ENCODE measurements at regions of chr20 and their contacts with region 1.

Region 1: DNA sequence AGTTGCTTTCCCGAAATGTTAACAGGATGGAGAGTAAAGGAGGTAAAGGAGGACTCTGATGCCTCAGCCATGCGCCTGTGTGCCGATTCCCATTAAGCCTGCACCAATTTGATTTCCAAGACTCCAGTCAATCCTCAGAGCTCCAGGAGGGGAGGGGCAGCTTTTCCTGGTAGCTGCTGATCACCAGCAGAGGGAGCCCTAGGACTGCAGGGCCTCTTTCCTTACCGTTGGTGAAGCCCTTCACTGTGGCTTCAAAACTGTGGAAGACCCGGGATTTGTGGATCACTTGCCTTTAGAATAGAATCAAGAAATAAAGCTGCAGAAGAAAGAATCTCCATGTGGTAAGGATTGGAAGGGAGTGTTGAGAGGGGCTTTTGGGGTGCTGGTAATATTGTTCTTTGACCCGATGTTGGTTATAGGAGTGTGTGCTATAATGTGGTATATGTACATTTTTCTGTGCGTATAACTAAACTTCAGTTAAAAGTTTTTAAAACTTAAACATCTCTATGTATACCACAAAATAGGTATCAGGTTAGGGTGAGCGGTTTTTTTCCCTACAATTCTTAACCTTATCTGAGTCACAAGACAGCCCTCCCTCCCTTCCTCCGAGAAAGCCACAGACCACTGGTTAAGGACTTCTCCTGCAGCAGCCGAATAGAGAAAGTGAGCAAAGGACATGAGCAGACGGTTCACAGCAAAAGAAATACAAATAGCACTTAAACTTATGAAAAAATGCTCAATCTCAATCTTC is 6.9 kb upstream of the OSER1 start:
- DNase-seq: peak; percentile 71
- H3K4me3 Mint-ChIP-seq: peak overlapping the region; percentile 56
- H3K27ac Mint-ChIP-seq: peak overlapping the region; percentile 78
- H3K4me1 Mint-ChIP-seq: peaks cover 38% of the 10 kb centered on the region
- H3K27me3 Mint-ChIP-seq: no peaks in the 10 kb centered on the region

Region 2: GRCh38 chr20:44176833-44177534 is 40.5 kb before region 1 on chr20:
- CTCF ChIA-PET with region 1: no interaction called
- POLR2A ChIA-PET with region 1: no interaction called
- DNase-seq: no peak
- H3K4me3 Mint-ChIP-seq: no peak overlapping the region
- H3K27ac Mint-ChIP-seq: no peak overlapping the region
- H3K4me1 Mint-ChIP-seq: no peaks in the 10 kb centered on the region
- H3K27me3 Mint-ChIP-seq: peaks cover 23% of the 10 kb centered on the region

Region 3: GRCh38 chr20:44196271-44196670 is 21.2 kb before region 1 on chr20:
- CTCF ChIA-PET with region 1: interaction called, 12 read pairs
- POLR2A ChIA-PET with region 1: no interaction called
- DNase-seq: no peak
- H3K4me3 Mint-ChIP-seq: no peak overlapping the region
- H3K27ac Mint-ChIP-seq: no peak overlapping the region
- H3K4me1 Mint-ChIP-seq: peaks cover 43% of the 10 kb centered on the region
- H3K27me3 Mint-ChIP-seq: peaks cover 7% of the 10 kb centered on the region

Region 4: DNA sequence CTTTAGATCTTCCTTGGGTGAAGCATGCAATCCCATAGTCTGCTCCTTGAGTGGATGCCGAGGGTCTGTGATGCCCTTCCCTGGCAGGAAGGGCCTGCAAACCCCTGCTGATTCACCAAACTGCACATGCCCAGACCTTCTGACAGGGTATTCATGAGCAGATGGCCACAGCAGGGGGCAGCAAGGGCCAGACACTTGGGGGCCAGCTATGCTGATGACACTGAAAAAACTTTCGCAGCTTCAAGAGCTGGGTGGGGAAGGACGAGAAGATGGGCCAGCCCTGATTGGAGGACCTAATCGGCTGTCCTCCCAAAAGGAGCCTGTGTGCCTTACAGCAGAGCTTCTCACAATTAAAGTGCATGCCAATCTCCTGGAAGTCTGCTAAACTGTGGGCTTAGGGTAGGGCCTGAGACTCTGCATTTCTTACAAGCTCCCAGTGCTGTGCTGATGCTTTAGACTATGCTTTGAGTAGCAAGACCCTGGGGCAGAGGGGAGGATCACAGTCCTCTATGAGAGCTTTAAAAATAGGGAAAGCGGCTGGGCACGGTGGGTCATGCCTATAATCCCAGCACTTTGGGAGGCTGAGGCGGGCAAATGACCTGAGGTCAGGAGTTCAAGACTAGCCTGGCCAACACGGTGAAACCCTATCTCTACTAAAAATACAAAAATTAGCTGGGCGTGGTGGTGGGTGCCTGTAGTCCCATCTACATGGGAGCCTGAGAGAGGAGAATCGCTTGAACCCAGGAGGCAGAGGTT is 14.4 kb after region 1 on chr20:
- CTCF ChIA-PET with region 1: interaction called, 11 read pairs
- POLR2A ChIA-PET with region 1: interaction called, 4 read pairs
- DNase-seq: no peak
- H3K4me3 Mint-ChIP-seq: no peak overlapping the region
- H3K27ac Mint-ChIP-seq: no peak overlapping the region
- H3K4me1 Mint-ChIP-seq: no peaks in the 10 kb centered on the region
- H3K27me3 Mint-ChIP-seq: no peaks in the 10 kb centered on the region

Region 5: DNA sequence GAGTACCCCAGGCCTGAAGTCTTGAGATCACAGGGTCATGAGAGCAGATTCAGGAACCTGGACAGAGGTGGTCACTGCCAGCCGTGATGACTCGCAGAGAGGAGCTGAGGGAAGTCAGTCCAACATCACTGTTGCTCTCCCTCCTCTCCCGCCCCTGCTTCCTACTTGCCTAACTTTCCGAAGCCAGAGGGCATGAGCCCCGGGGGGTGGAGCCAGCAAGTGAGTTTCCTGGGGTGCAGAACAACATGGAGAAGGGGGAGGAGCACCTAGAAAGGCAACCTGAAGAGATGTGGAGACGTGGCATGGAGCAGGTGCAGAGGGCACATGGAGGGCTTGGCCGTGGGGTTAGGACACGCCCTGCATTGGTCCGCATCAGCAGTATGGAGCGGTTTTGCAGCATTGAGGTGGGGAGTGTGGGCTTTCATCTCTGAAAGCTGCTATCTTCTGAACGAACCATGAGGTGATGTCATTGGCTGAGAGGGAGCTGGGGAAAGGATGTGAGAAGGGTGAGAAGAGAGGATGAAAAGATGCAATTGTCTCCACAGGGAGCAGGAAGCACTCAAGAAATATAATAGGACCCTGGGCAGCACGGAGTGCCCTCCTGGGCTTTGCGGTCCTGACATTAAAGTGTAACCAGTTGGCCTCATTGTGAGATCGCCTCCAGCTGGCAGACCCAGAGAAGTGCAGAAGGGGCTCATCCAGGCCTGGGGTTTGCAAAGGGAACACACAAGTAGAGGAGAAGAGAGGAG is 54.6 kb after region 1 on chr20:
- CTCF ChIA-PET with region 1: interaction called, 12 read pairs
- POLR2A ChIA-PET with region 1: interaction called, 4 read pairs
- DNase-seq: no peak
- H3K4me3 Mint-ChIP-seq: no peak overlapping the region
- H3K27ac Mint-ChIP-seq: no peak overlapping the region
- H3K4me1 Mint-ChIP-seq: no peaks in the 10 kb centered on the region
- H3K27me3 Mint-ChIP-seq: no peaks in the 10 kb centered on the region

Region 6: DNA sequence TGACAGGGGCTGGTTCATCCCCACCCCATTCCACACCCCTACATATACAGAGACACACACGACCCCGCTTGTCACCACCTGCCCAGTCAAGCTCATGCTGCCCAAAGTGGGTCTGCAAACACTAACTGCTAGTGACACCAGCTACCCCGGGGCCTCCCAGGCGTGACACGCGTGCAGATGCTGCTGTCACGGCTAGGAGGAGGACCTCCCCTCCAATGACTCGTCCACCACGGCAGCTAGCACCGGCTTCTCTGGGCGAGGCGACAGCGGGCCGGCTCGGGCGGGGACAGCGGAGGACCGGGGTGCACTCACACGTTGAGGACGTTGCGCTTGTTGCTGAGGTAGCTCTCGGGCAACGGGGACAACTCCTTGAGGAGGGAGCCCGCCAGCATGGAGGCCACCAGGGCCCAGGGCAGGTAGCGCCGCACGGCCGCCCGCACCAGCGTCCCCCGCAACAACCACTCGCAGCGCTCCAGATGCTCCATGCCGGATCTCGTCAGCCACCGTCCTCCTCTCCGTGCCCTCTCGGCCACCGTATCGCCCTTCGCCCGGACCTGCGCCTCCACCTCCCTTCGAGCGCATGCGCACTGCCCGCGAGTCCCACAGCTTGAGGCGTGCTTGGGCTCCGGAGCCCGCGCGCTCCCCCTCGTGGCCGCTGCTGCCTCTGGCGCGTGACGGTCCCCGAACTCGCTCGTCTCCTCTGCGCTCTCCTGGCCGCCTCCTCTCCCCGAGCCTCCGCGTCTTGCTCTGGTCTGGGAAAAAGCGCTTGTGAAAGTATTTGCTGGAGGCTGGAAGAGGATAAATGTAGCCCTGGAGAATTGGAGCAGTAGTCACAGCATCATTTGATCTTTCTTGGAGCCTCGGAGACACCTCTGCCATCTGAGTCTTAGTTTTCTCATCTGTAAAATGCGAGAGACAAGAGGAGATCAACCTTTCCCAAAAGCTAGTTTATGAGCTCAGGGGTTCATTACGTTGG is 93.4 kb after region 1 on chr20 and contains the start of gene FITM2:
- CTCF ChIA-PET with region 1: interaction called, 470 read pairs
- POLR2A ChIA-PET with region 1: interaction called, 62 read pairs
- DNase-seq: peak; percentile 97
- H3K4me3 Mint-ChIP-seq: peak within 1 kb of the TSS; percentile 89
- H3K27ac Mint-ChIP-seq: peak within 1 kb of the TSS; percentile 77
- H3K4me1 Mint-ChIP-seq: peaks cover 19% of the 10 kb centered on the region
- H3K27me3 Mint-ChIP-seq: no peaks in the 10 kb centered on the region
- total RNA-seq, gene FITM2: 2.2 to 2.7 TPM

Region 7: DNA sequence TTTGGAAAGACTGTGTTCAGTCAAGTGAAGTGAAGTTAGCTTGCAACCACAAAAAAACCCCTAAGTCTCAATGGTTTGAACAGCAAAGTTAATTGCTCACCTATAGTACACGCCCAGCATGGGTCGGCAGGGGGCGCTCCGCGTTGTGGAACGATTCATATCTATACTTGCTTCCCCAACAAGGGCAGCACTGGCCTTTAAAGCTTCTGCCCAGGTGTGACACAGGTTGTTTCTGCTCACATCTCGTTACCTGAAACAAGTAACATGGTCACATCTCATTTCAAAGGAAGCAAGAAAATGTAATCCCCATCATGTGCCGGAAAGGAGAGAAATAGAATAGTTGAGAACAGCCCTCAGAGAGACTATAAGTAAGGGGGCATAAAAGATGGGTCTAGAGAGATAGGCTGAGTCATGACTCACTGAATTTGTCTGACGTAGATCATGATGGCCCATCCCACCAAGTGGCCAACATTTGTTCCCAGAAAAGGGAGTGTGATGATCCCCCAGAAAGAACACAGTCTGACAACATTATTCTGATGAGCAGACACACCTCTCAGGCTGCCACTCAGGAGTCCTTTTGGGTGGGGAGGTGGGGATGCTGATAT is 167.0 kb after region 1 on chr20:
- CTCF ChIA-PET with region 1: interaction called, 92 read pairs
- POLR2A ChIA-PET with region 1: interaction called, 5 read pairs
- DNase-seq: peak; percentile 84
- H3K4me3 Mint-ChIP-seq: no peak overlapping the region
- H3K27ac Mint-ChIP-seq: no peak overlapping the region
- H3K4me1 Mint-ChIP-seq: peaks cover 5% of the 10 kb centered on the region
- H3K27me3 Mint-ChIP-seq: peaks cover 18% of the 10 kb centered on the region

Region 8: DNA sequence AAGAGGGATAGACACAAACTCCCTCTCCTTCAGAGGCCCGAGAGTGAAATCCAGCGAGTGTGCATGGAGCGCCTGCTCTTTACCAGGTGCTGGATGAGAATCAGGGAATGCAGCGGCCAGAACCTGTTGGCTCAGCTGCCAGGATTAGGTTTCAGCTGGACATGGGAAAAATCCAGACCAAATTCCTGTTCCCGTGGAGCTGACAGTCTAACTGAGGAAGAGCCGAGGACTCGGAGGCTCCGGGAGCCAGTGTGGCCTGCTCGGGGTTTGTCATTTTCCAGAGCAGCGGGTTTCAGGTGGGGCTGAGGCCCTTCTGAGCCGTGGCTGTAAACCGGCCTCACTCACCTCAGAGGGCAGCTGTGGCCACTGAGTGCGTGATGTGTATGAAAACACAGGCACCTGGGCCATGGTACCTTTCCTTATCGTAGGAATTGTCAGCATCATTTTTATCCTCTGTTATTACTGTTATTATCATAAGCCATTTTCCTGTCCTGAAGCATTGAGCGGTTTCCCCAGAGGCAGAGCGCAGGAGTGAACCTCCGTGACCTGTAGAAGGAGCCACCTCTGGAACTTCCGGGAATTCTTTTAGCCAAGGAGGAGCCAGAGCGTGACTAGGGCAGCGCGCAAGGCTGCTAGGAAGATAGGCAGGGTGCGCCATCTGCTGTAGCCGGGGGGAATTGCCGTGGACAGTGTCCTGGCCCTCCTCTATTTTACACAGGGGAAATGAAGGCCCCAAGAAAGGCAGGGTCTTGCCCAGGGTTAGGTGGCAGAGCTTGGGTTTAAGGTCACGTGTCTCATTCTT is 392.2 kb after region 1 on chr20:
- CTCF ChIA-PET with region 1: interaction called, 40 read pairs
- POLR2A ChIA-PET with region 1: no interaction called
- DNase-seq: peak; percentile 78
- H3K4me3 Mint-ChIP-seq: no peak overlapping the region
- H3K27ac Mint-ChIP-seq: peak overlapping the region; percentile 48
- H3K4me1 Mint-ChIP-seq: peaks cover 12% of the 10 kb centered on the region
- H3K27me3 Mint-ChIP-seq: no peaks in the 10 kb centered on the region

Measured in activated CD4-positive, alpha-beta memory T cell treated with anti-CD3 and anti-CD28 coated beads, Interleukin-2, amount 10 ng/mL, durations not matched to agents 7 days and 5 days (primary cell).